K562 (cell line): ENCODE measurements at regions of chr16 and their contacts with region 1.

Region 1: DNA sequence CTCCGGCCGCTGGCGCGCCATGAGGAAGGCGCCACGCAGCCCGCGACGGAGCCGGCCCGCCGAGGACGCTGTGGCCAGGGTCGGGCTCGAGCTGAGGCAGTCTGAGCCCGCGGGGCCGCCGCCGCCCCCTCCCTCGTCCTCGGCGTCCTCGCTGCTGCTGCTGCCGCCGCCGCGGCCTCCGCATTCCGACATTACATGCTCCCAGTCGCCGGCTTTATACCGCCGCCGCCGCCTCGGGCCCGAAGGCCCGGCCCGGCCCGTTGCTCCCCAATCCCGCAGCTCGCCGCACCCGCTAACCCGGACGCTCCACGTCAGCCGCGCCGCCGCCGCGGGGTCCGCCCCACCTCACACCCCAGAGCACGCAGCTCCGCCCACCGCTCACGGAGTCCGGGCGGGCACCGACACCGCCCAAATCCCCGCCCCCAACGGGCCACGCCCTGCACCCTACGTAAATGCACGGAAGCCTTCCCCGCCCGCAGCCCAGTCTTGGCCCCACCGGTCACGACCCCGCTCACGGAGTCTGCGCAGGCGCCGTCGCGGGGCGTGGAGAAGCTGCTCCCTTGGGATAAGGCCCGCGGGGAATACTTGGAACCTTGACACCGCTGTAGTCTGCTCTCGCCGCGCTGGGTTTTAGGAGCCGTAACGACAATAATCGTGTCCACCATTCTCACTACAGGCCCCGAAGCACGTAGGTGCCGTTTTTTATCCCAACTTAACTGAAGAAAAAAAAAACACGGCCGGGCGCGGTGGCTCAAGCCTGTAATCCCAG is at the start of gene TXNDC11:
- DNase-seq: peak; percentile 96 to 99 (median 96)
- ATAC-seq: peak; percentile 95
- H3K4me3 ChIP-seq: peak within 1 kb of the TSS; percentile 91
- H3K27ac ChIP-seq: peak within 1 kb of the TSS; percentile 95
- H3K4me1 ChIP-seq: peaks cover 18 to 20% of the 10 kb centered on the region in 2 experiments; a peak in 4 of 5 replicates
- H3K27me3 ChIP-seq: no peaks in the 10 kb centered on the region
- CTCF ChIP-seq: no peak
- EP300 ChIP-seq: no peak; the same call in 1 of the 2 replicates
- POLR2A ChIP-seq: peak; percentile 82
- RAD21 ChIP-seq: no peak
- polyA plus RNA-seq, gene TXNDC11: 0.66 to 2.3 TPM

Region 2: GRCh38 chr16:11396241-11397048 is 346.3 kb before region 1 on chr16:
- CTCF ChIA-PET with region 1: no interaction called
- POLR2A ChIA-PET with region 1: no interaction called
- in situ Hi-C with region 1: no loop called
- intact Hi-C with region 1: no loop called
- DNase-seq: peak; percentile 78 to 91 (median 88)
- ATAC-seq: peak; percentile 89
- H3K4me3 ChIP-seq: no peak overlapping the region
- H3K27ac ChIP-seq: no peak overlapping the region
- H3K4me1 ChIP-seq: peaks cover 0 to 26% of the 10 kb centered on the region in 2 experiments; a peak in 2 of 5 replicates
- H3K27me3 ChIP-seq: peaks cover 16 to 62% of the 10 kb centered on the region in 2 experiments; a peak in 4 of 5 replicates
- CTCF ChIP-seq: peak; percentile 92 to 97 (median 92)
- EP300 ChIP-seq: no peak
- POLR2A ChIP-seq: no peak
- RAD21 ChIP-seq: peak; percentile 76 to 95

Region 3: GRCh38 chr16:11667824-11668622 is 74.7 kb before region 1 on chr16 and contains the start of gene SNN:
- CTCF ChIA-PET with region 1: no interaction called
- POLR2A ChIA-PET with region 1: no interaction called
- in situ Hi-C with region 1: no loop called
- intact Hi-C with region 1: no loop called
- DNase-seq: peak; percentile 92 to 99 (median 98)
- ATAC-seq: peak; percentile 99
- H3K4me3 ChIP-seq: peak within 1 kb of the TSS; percentile 41
- H3K27ac ChIP-seq: no peak within 1 kb of the TSS
- H3K4me1 ChIP-seq: peaks cover 4 to 51% of the 10 kb centered on the region in 2 experiments; a peak in 4 of 5 replicates
- H3K27me3 ChIP-seq: peaks cover 2 to 31% of the 10 kb centered on the region in 2 experiments; a peak in 3 of 5 replicates
- CTCF ChIP-seq: no peak
- EP300 ChIP-seq: no peak
- POLR2A ChIP-seq: no peak
- RAD21 ChIP-seq: no peak
- polyA plus RNA-seq, gene SNN: 0.07 to 0.22 TPM

Region 4: DNA sequence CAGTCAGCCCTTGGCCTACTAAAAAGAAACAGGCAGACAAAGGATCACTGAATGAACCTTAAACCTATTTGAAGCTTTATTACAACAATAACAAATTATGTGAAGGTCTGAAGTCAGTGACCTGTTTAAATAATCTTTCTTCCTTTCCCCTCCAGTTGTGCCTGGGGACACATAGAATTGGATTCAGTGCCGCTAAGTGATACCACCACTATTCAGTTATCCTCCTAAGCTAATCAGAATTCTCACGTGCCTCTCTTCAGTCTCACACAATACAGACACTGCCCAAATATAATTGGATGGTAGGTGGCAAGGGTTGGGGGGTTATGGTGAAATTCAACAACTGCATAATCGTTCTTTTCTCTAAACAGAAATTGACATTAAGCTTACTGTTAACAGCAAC is 11.5 kb before region 1 on chr16:
- CTCF ChIA-PET with region 1: interaction called, 3 read pairs
- POLR2A ChIA-PET with region 1: interaction called, 16 read pairs
- in situ Hi-C with region 1: no loop called
- intact Hi-C with region 1: no loop called
- DNase-seq: no peak
- ATAC-seq: no peak
- H3K4me3 ChIP-seq: no peak overlapping the region
- H3K27ac ChIP-seq: no peak overlapping the region
- H3K4me1 ChIP-seq: peaks cover 0 to 14% of the 10 kb centered on the region in 2 experiments; a peak in 3 of 5 replicates
- H3K27me3 ChIP-seq: no peaks in the 10 kb centered on the region
- CTCF ChIP-seq: no peak
- EP300 ChIP-seq: no peak
- POLR2A ChIP-seq: no peak
- RAD21 ChIP-seq: no peak